ENCODE measurements at regions of chr15 and their contacts with region 1.

Region 1: DNA sequence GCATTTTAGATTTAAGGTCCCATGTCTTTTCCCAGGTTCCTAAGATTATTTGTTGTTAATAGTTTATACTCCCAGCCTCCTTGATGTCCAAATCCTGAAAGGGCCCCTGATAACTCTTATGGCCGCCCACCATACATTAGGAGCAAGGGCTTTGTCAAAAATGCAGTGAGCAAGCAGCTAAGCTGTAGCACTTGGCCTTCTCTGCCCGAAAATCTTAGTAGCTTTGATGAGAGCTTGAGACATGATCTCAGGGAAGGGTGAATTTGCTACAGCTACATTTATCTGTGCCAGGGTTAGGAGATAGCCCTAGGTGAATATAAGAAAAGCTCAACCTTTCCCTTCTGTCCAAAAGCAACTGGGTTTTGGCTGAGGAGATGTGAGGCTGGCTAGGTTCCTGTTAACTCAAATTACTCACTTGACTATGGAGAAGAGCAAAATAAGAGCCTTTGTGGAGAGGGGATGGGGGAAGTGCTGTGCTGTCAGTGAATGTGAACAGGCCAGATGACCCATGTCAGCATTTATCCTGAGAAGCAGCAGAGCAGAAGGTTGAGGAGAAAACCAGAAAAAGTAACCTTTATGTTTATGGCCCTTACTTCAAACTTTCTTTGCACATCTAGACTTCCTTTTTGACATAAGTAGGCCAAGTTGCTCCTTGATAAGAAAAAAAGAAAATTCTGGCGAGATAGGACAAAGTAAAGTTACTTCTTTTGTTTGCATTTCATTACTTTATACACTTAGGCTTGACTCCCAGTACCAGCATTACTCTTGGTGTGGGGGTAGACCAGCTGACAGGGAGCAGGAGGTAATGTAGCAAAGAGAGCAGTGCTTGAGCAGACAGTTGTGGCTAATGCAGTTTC is 21.1 kb downstream of the MAPK6 start:
- DNase-seq: no peak
- CTCF ChIP-seq: no peak

Region 2: GRCh38 chr15:51965691-51966090 is 74.5 kb before region 1 on chr15:
- CTCF ChIA-PET with region 1: no interaction called
- POLR2A ChIA-PET with region 1: no interaction called
- DNase-seq: no peak
- CTCF ChIP-seq: no peak

Region 3: GRCh38 chr15:52028431-52029093 is 11.6 kb before region 1 on chr15:
- CTCF ChIA-PET with region 1: interaction called, 12 read pairs
- POLR2A ChIA-PET with region 1: interaction called, 3 read pairs
- DNase-seq: no peak
- CTCF ChIP-seq: no peak

Region 4: GRCh38 chr15:52050416-52050815 is 10.3 kb after region 1 on chr15:
- CTCF ChIA-PET with region 1: interaction called, 10 read pairs
- POLR2A ChIA-PET with region 1: interaction called, 4 read pairs
- DNase-seq: no peak
- CTCF ChIP-seq: no peak

Measured in GM10248 (cell line).